ENCODE measurements at regions of chr1 and their contacts with region 1.

Region 1: DNA sequence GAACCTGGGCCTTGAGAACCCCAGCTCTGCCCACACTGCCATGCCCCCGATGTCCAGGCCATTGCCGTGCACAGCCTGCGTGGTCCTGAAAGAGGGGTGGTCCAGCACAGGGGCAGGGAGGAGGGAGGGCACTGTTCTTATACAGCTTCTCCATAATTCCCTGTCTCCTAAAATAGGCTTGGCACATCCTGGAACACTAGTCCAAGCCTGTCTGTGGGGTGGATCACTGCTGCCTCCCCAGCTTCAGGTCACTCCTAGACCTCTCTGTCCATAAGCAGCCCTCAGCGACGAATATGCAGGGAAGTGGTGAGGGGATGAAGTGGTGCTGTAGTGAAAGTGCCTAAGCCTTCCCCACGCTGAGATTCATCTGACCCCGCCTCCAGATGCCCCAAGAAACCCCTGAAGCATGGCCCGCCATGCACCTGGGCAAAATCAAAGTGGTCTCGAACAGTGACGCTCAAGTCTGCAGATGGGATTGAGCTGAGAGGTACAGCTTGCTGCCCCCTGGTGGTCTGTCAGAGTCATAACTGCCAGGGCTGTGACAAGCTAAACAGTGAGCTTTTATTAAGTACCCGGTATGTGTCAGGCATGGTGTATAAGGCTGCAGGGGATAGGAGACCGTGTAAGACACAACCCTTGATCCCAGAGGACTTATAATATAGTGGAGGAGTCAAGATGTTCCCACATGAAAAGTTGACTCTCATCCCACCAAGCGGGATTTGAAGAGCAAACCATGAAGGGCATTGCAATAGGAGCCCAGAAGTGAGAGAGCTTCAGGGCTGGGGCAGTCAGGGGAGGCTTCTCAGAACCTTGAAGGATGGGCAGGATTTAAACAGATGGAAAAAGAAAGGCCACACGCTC is 66.6 kb downstream of the FAM163A start:
- DNase-seq: peak; percentile 81
- H3K4me3 Mint-ChIP-seq: no peak overlapping the region
- H3K27ac Mint-ChIP-seq: no peak overlapping the region
- H3K4me1 Mint-ChIP-seq: peaks cover 10% of the 10 kb centered on the region
- H3K27me3 Mint-ChIP-seq: no peaks in the 10 kb centered on the region

Region 2: DNA sequence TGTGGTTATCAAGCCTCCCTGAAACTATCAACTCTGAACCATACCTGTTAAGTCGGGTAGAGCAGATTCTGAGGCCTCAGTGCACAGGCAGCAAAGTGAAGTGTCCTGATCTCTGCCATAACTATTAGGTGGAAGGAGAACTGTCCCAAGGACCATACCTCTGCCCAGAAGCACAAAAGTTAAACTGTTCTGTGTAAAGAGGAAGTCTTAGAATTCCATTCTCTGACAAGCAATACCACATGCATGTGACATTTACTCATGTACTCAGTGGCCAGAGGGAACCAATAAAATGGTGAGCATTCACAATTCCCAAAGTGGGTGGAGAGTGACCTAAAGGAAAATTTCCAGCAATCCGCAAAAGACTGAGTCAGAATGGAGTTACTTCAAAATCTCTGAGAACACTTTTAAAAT is 666.8 kb before region 1 on chr1:
- CTCF ChIA-PET with region 1: no interaction called
- intact Hi-C with region 1: loop called (anchors 1 kb)
- DNase-seq: peak; percentile 30
- H3K4me3 Mint-ChIP-seq: peak overlapping the region; percentile 32
- H3K27ac Mint-ChIP-seq: peak overlapping the region; percentile 68
- H3K4me1 Mint-ChIP-seq: peaks cover 41% of the 10 kb centered on the region
- H3K27me3 Mint-ChIP-seq: no peaks in the 10 kb centered on the region

Region 3: GRCh38 chr1:179706339-179706941 is 103.3 kb before region 1 on chr1:
- CTCF ChIA-PET with region 1: interaction called, 771 read pairs
- intact Hi-C with region 1: loop called (anchors 1 kb)
- DNase-seq: peak; percentile 83
- H3K4me3 Mint-ChIP-seq: no peak overlapping the region
- H3K27ac Mint-ChIP-seq: no peak overlapping the region
- H3K4me1 Mint-ChIP-seq: peaks cover 23% of the 10 kb centered on the region
- H3K27me3 Mint-ChIP-seq: no peaks in the 10 kb centered on the region

Region 4: GRCh38 chr1:179761296-179761695 is 48.4 kb before region 1 on chr1:
- CTCF ChIA-PET with region 1: interaction called, 15 read pairs
- intact Hi-C with region 1: no loop called
- DNase-seq: no peak
- H3K4me3 Mint-ChIP-seq: no peak overlapping the region
- H3K27ac Mint-ChIP-seq: no peak overlapping the region
- H3K4me1 Mint-ChIP-seq: no peaks in the 10 kb centered on the region
- H3K27me3 Mint-ChIP-seq: no peaks in the 10 kb centered on the region

Region 5: DNA sequence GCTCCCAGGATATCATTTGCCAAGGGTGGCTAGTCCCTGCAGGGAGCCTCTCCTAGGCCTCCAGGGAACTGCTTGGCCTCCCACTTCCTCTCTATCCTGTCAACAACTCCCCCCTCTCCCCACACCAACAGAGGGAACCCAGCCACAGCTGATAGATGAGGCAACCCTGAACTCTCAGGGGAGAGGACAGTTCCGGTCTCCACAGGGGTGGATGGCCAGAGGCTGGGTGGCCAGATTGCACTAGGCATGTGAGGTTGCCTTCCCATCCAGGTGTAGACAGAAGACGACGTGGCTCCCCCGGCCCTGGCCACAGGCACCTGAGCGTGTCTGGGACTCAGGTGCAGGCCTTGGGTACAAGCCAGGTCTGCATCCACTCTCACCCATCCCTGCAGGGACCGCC is 14.5 kb after region 1 on chr1:
- CTCF ChIA-PET with region 1: interaction called, 28 read pairs
- intact Hi-C with region 1: no loop called
- DNase-seq: no peak
- H3K4me3 Mint-ChIP-seq: no peak overlapping the region
- H3K27ac Mint-ChIP-seq: no peak overlapping the region
- H3K4me1 Mint-ChIP-seq: no peaks in the 10 kb centered on the region
- H3K27me3 Mint-ChIP-seq: no peaks in the 10 kb centered on the region

Region 6: DNA sequence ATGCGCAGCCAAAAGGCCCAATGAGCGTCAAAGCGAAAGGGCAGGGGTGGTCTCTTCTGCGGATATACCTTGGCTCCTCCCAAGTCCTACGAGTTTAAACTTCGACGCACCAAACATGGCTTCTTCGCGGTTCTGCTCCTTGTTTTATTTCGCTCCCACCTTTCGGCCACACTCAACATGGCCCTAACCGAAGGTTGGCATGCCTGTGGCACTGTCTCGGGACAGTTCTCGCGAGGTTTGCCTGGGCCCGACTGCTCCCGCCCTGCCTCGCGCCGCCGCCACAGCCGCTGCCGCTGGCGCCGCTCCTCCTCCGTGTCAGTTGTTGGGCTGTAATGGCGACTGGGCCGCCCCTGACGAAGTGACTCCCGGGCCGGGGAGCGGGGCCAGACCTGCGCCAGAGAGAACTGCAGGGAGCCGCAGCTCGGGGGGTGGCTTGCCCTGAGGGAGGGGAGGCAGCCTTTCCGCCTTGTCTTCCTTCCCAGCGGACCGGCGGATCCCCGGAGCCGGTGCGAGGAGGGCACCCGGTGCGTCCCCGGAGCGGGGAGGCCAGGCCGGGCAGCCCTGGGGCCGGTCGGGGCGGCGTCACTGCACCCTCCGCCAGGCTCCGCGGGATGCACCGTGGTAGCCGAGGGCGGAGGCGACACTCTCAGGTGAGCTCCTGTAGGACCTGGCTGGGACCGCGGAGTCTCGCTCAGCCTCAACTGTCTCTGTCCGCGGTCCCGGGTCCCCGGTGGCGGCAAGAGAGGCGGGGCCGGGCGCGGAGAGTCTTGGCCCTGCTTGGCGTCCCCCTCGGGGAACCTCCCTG is 145.0 kb after region 1 on chr1 and contains the start of gene CEP350:
- CTCF ChIA-PET with region 1: interaction called, 4 read pairs
- intact Hi-C with region 1: loop called (anchors 1 kb)
- DNase-seq: peak; percentile 99
- H3K4me3 Mint-ChIP-seq: peak within 1 kb of the TSS; percentile 85
- H3K27ac Mint-ChIP-seq: peak within 1 kb of the TSS; percentile 95
- H3K4me1 Mint-ChIP-seq: peaks cover 41% of the 10 kb centered on the region
- H3K27me3 Mint-ChIP-seq: no peaks in the 10 kb centered on the region
- total RNA-seq, gene CEP350: 30.3 to 36.0 TPM